ENCODE measurements at regions of chr7 and their contacts with region 1.

Region 1: DNA sequence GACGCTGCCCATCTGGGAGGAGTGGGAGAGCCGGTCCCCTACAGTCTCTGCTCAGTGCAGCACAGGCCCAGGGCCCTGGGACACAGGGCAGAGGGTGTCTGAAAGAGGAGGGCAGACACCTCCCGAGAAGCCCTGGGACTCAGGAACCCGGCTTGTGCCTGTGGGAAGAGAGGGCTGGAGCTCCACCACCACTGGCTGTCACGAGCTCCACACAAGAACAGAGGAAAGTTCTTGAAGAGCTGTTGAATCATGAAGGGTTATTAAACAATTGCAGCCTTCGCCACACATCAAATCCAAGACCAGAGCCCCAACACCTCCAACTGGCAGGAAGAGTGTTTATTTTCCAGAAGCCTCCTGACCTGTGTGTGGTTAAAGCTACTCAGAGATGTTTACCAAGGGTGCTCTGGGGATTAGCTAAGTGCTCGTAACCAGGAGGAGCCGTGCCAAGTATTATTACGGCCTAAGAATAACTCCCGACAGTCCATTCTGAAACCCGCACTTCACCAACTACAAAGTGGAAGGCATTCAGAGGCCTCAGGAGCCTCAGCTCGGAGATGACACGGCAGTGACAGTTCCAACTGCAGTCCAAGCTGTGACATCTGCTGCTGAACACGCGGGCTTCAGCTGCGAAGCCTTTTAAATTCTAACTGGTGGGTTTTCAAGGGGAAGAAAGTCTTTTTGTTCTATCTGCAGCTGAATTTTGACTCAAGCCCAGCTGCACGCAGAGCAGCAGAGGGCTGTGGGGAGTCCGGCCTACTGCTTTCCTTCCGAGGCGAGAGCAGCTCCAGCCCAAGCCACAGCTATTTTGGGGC is 75.1 kb downstream of the MAD1L1 start:
- DNase-seq: no peak
- H3K27ac ChIP-seq: peak overlapping the region; percentile 27
- CTCF ChIP-seq: no peak

Region 2: DNA sequence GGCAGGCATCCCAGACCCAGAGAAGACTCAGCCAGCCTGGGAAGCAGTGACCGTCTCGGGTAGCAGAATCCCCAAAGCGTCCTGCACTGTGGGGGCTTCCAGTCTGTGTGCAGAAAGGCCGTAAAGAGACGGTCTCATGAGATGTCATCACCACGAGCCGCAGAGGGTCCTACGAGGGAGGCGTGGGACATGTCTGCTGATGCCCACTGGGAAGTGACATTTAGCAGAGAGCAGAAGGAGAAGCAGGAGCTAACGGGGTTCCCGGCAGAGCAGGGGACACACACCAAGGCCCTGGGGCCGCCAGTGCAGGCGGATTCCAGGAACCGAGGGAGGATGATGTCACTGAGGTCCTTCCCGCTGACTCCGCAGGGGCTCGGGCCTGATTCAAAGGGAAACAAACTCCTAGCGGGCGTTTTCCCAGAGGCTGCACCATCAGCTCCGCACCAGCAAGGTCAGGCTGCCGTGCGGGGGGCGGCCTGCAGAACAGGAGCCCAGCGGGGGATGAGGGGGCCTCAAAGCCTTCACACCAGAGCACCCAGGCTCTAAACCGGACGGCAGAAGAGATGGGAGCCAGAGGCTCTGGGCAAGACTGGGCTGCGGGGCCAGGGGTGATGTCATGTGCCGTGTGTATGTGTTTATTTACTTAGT is 1552.7 kb before region 1 on chr7:
- CTCF ChIA-PET with region 1: interaction called, 11 read pairs
- POLR2A ChIA-PET with region 1: no interaction called
- DNase-seq: no peak
- H3K27ac ChIP-seq: peak overlapping the region; percentile 70
- CTCF ChIP-seq: no peak

Region 3: DNA sequence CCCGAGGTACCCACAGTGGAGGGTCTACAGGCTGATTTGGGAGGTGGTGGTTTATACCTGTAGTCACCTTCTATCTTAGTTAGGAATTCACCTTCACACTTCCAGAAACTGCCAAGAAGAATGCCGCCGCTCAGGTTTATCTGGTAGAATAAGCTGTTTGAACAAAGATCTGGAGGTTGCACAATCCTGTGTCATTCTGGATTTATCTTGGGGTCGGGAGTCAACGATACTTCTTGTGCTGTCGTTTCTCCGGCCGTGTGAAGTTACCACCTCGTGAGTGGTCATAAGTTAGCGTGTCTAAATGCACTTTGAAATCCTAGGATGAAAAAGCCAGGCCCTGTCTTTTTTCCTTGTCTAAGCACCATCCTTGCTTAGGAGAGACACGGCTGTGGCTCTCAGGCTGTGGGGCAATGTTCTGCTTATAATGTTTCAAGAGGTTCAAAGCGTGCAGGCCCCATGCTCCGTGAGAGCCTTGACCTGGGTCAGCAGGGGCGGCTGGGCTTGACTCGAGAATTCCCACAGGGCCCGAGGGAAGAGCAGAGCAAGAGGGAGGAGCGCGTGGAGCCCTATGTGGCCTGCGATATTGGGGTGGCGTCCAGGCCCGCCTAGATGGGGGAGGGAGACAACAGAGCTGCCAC is 283.1 kb after region 1 on chr7:
- CTCF ChIA-PET with region 1: no interaction called
- POLR2A ChIA-PET with region 1: no interaction called
- DNase-seq: peak; percentile 41
- H3K27ac ChIP-seq: no peak overlapping the region
- CTCF ChIP-seq: no peak

Measured in RWPE1 (cell line).